SK-N-SH (cell line): ENCODE measurements at regions of chr1 and their contacts with region 1.

Region 1: GRCh38 chr1:68340951-68341350 is 108.6 kb upstream of the WLS start:
- DNase-seq: no peak
- H3K4me3 ChIP-seq: no peak overlapping the region
- H3K27ac ChIP-seq: no peak overlapping the region
- H3K4me1 ChIP-seq: peaks cover 0 to 3% of the 10 kb centered on the region in 2 experiments; a peak in 1 of 4 replicates
- H3K27me3 ChIP-seq: no peaks in the 10 kb centered on the region
- CTCF ChIP-seq: no peak
- EP300 ChIP-seq: no peak
- RAD21 ChIP-seq: no peak

Region 2: DNA sequence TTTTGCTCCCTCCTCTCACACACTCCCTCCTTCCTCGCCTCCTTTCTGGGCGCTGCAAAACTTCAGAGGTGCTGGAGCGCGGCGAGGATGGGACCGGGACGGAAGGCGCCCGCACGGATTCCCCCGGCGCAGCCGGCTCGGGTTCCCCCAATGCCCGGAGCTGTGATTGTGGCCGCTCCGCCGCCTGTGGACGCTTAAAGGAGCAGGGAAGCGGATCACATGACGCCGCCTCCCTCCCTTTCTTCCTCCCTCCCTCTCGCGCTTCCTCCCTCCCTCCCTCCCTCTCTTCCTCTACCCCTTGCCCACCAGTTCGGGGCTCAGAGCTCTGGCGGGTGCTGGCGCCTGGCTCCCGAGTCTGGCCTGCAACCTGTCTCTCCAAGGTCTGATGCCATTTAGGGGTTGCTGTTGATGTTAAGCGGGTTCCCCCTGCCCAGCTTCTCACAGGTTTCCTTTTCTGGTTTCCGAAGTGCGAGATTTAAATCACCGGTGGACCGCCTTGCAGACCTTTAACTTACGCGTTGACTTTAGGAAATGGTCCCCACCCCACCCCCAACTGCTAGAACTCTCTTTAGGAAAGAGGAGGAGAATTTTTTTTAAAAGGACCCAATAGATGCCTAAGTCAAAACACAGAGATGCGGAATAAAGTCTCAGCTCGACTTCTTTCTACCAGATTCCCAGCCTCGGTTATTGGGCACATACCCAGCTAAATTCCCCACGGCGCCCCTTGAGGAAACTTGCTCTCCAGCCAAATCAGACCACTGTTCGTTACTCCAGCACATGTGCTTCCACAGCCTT is 108.4 kb before region 1 on chr1 and contains the start of gene WLS:
- CTCF ChIA-PET with region 1: interaction called, 13 read pairs
- POLR2A ChIA-PET with region 1: no interaction called
- DNase-seq: peak; percentile 81
- H3K4me3 ChIP-seq: peak within 1 kb of the TSS; percentile 87 to 89
- H3K27ac ChIP-seq: peak within 1 kb of the TSS; percentile 69 to 74
- H3K4me1 ChIP-seq: peaks cover 12 to 16% of the 10 kb centered on the region in 2 experiments; a peak in 3 of 4 replicates
- H3K27me3 ChIP-seq: no peaks in the 10 kb centered on the region
- CTCF ChIP-seq: peak; percentile 21; the same call in 1 of the 2 replicates
- EP300 ChIP-seq: no peak
- RAD21 ChIP-seq: no peak
- polyA plus RNA-seq, gene WLS: 69.0 and 73.7 TPM in 2 replicates